Caco-2 (cell line): ENCODE measurements at regions of chr11 and their contacts with region 1.

Region 1: GRCh38 chr11:83071567-83072349 is at the start of gene RAB30:
- DNase-seq: peak; percentile 99 to 100
- H3K4me3 ChIP-seq: peak within 1 kb of the TSS; percentile 62
- H3K4me3 Mint-ChIP-seq: no peak within 1 kb of the TSS
- H3K27ac Mint-ChIP-seq: no peak within 1 kb of the TSS
- H3K4me1 ChIP-seq: peaks cover 33% of the 10 kb centered on the region
- H3K4me1 Mint-ChIP-seq: peaks cover 26% of the 10 kb centered on the region
- H3K27me3 ChIP-seq: no peaks in the 10 kb centered on the region
- H3K27me3 Mint-ChIP-seq: no peaks in the 10 kb centered on the region
- CTCF ChIP-seq: no peak
- total RNA-seq, gene RAB30: 13.0 and 13.5 TPM in 2 replicates

Region 2: GRCh38 chr11:82867495-82868082 is 204.2 kb before region 1 on chr11:
- CTCF ChIA-PET with region 1: interaction called, 8 read pairs
- POLR2A ChIA-PET with region 1: interaction called, 3 read pairs
- intact Hi-C with region 1: loop called (anchors 2 kb)
- DNase-seq: peak; percentile 84 to 89
- H3K4me3 ChIP-seq: no peak overlapping the region
- H3K4me3 Mint-ChIP-seq: no peak overlapping the region
- H3K27ac Mint-ChIP-seq: no peak overlapping the region
- H3K4me1 ChIP-seq: no peaks in the 10 kb centered on the region
- H3K4me1 Mint-ChIP-seq: no peaks in the 10 kb centered on the region
- H3K27me3 ChIP-seq: no peaks in the 10 kb centered on the region
- H3K27me3 Mint-ChIP-seq: no peaks in the 10 kb centered on the region
- CTCF ChIP-seq: peak; percentile 75 to 95

Region 3: DNA sequence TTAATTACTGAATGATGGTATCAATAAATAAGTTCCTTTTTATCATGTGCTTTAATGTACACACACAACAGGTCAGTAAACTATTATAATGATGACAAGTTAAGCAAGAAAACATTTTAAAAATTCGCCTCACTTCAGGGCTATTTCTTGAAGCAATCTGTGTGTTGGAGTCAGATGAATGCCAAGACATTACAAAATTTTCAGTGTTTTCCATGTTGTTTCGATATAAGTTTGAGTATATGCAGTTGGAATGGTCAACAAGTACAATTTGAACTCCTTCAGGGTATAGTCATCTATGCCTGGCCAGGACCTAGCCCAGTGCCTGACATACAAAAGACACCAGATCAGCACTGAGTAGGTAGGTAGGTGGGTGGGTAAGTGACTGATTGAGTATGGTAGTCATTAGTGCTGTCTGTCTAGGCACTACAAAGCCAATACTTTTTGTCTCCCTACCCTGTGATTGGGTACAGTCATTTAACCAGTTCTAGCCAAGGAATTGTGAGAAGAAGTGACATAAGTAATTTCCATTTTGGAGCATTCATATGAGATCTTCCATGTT is 179.1 kb before region 1 on chr11:
- CTCF ChIA-PET with region 1: no interaction called
- POLR2A ChIA-PET with region 1: no interaction called
- intact Hi-C with region 1: no loop called
- DNase-seq: no peak
- H3K4me3 ChIP-seq: no peak overlapping the region
- H3K4me3 Mint-ChIP-seq: no peak overlapping the region
- H3K27ac Mint-ChIP-seq: no peak overlapping the region
- H3K4me1 ChIP-seq: peaks cover 8% of the 10 kb centered on the region; the same call in 1 of the 2 replicates
- H3K4me1 Mint-ChIP-seq: peaks cover 25% of the 10 kb centered on the region
- H3K27me3 ChIP-seq: no peaks in the 10 kb centered on the region
- H3K27me3 Mint-ChIP-seq: no peaks in the 10 kb centered on the region
- CTCF ChIP-seq: no peak

Region 4: DNA sequence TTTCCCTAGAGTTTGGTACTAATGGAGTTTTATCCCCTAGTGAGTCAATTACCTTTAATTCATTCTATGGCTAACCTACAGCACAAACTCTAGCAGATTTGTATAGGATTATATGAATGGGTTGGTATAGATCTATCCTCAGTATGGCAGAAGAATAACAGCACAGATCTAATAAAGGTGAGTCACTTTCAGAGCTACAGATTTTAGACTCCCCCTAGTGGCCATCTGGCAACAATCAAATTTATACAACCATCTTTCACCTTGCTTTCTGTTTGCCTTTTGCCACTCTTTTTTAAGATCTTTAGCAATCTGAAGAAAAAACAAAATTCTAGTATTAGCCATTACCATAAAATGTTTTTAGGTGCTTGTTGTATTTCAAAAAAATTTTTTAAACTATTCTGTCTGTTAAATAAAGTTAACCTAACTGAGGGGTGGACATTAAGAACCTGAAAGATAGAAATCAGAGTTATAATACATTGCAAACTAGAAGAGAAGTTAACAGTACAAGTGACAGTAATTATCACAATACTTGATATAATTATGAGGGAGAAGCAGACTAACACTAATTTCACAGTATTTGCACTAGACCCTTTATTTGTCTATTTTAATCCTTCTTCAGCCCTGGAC is 144.4 kb before region 1 on chr11:
- CTCF ChIA-PET with region 1: interaction called, 8 read pairs
- POLR2A ChIA-PET with region 1: interaction called, 6 read pairs
- intact Hi-C with region 1: loop called (anchors 5 kb)
- DNase-seq: peak in 1 of 2 experiments; percentile 67
- H3K4me3 ChIP-seq: no peak overlapping the region
- H3K4me3 Mint-ChIP-seq: no peak overlapping the region
- H3K27ac Mint-ChIP-seq: no peak overlapping the region
- H3K4me1 ChIP-seq: no peaks in the 10 kb centered on the region
- H3K4me1 Mint-ChIP-seq: peaks cover 11% of the 10 kb centered on the region
- H3K27me3 ChIP-seq: no peaks in the 10 kb centered on the region
- H3K27me3 Mint-ChIP-seq: no peaks in the 10 kb centered on the region
- CTCF ChIP-seq: peak; percentile 87 to 88

Region 5: DNA sequence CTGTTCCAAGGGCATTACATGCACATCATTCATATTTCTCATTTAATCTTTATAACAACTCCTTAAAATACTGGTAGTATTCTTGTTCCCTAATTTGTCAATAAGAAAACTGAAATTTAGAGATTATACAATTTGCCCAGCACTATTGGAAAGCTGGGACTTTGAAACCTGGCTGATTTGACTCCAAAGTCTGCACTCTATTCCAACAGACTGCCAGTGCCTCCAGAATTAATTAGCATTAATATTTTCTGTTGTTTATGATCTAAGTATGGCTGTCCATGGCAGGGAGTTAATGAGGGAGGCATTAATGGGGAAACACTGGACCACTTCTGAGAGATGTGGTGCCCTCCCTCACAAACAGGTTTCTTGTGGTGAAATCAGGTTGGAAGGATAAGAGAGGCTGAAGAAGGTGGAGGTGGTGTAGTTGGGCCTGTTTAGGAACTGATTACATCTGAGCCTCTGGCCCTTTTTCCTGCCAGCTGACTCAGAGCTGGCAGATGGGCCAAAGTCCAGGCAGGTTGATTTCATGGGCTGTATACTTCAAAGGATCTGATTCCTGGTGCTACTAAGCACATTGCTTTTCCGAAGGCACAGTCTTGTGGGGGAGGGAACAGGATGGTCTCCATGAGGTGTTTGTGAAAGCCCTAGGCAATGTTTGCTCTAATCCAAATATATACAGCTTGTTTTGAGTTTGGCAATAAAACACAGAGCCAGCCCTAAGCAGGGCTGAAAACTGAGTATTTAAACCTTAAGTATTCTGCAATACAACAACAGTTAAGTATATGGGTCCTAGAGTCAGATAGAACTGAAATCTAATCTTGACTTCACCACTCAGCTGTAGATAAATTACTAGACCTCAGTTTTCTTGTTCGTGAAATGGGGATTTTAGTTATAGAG is 21.0 kb after region 1 on chr11:
- CTCF ChIA-PET with region 1: no interaction called
- POLR2A ChIA-PET with region 1: interaction called, 13 read pairs
- intact Hi-C with region 1: loop called (anchors 1 kb)
- DNase-seq: peak; percentile 95 to 96
- H3K4me3 ChIP-seq: no peak overlapping the region
- H3K4me3 Mint-ChIP-seq: peak overlapping the region; percentile 21
- H3K27ac Mint-ChIP-seq: peak overlapping the region; percentile 55
- H3K4me1 ChIP-seq: peaks cover 43% of the 10 kb centered on the region
- H3K4me1 Mint-ChIP-seq: peaks cover 65% of the 10 kb centered on the region
- H3K27me3 ChIP-seq: no peaks in the 10 kb centered on the region
- H3K27me3 Mint-ChIP-seq: no peaks in the 10 kb centered on the region
- CTCF ChIP-seq: no peak

Region 6: DNA sequence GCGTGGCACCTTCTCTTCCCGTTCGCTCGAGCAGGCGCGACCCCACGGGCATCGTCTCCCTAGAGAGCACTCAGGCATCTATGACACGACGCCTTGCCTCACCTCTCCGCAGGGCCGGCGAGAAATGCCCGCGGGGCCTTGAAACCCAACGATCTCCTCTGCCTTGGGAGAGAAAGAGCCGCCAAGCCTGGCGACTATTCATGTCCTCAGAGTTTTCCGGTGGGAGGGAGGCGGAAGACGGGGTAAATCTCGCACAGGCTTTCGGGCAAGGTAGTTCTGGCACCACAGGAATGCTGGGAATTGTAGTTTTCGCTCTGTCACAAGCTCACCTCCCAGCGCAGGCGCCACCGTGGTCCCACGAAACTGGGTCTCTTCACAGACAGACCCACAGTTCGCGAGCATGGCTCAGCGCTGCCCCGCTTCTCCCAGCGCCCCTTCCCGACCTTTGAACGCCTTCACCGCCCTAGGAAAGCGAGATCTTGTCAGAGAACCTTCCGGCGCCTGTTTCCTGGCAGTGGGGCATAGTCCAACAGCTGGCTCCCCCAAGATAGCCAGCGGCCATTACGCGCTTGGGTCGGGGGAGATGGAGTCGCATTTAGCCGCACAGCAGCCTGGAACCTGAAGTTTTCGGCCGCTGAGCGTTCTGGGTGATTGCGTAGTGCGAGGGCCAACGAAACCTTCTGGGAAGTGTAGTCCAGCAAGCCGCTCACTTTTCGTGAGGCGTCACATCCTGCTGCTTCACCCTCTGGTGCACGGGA is 214.2 kb after region 1 on chr11 and contains the start of gene CCDC90B:
- CTCF ChIA-PET with region 1: no interaction called
- POLR2A ChIA-PET with region 1: interaction called, 5 read pairs
- intact Hi-C with region 1: loop called (anchors 2 kb)
- DNase-seq: peak; percentile 98 to 99
- H3K4me3 ChIP-seq: peak within 1 kb of the TSS; percentile 93
- H3K4me3 Mint-ChIP-seq: peak within 1 kb of the TSS; percentile 73
- H3K27ac Mint-ChIP-seq: peak within 1 kb of the TSS; percentile 97
- H3K4me1 ChIP-seq: peaks cover 14% of the 10 kb centered on the region
- H3K4me1 Mint-ChIP-seq: peaks cover 7% of the 10 kb centered on the region
- H3K27me3 ChIP-seq: no peaks in the 10 kb centered on the region
- H3K27me3 Mint-ChIP-seq: no peaks in the 10 kb centered on the region
- CTCF ChIP-seq: peak in 1 of 2 experiments; percentile 66
- total RNA-seq, gene CCDC90B: 46.2 and 63.6 TPM in 2 replicates